ENCODE measurements at regions of chr6 and their contacts with region 1.

Region 1: DNA sequence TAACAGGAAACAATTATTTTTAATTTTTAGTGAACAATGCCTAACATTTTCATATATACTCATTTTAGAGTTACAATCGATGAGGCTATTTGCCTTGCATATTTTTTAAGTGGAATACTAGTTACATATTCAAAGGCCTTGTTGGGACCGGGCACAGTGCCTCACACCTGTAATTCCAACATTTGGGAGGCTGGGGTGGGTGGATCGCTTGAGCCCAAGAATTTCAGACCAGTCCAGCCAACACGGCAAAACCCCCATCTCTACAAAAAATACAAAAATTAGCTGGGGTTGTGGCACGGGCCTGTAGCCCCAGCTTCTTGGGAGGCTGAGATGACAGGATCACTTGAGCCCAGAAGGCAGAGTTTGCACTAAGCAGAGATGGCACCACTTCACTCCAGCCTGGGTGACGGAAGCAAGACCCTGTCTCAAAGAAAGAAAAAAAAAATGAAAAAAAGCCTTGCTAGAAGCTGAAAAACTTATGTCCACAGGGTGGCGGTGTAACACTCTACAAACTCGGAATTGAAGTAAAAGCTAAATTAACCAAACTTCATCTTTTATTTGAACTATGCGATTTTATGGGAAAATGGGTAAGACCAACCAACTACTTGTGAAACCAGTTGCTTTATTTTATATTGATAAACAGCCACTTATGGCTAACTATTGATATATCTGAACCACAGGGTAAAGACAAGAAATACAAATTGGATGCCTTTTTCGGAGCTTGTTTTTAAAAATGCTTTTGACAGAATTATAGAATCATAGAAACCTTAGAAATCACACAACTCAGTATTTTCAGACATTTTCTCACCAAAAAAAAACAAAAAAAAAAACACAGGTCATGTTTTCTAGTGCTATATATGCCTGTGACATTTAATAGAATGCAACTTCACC is 24.1 kb upstream of the ROS1 start:
- DNase-seq: peak; percentile 58
- H3K4me3 ChIP-seq: no peak overlapping the region
- H3K27ac ChIP-seq: no peak overlapping the region
- H3K4me1 ChIP-seq: peaks cover 0 to 34% (median 6%) of the 10 kb centered on the region in 4 donors
- H3K27me3 ChIP-seq: peaks cover 30% of the 10 kb centered on the region
- CTCF ChIP-seq: peak; percentile 64 to 83 (median 72)
- EP300 ChIP-seq: no peak
- POLR2A ChIP-seq: no peak

Region 2: DNA sequence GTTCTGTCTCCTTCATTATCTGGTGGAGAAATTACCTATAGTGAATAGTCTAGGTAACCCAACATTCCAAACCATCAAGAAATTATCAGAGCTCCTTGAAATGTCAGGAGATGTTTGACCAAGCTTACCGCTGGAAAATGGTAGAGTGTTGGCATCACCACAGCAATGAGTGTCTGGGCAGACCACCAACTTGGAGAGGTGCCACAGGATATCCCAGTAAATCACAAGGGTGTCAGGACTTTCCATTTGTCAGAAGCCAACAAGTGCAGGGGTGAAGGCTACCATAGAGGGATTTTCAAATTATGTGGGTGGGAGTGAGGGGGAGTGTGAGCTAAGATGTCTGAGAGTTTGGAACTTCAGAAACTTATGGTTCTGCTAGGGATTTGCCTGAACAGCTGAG is 111.2 kb before region 1 on chr6:
- in situ Hi-C with region 1: no loop called
- intact Hi-C with region 1: no loop called
- DNase-seq: no peak
- H3K4me3 ChIP-seq: no peak overlapping the region
- H3K27ac ChIP-seq: no peak overlapping the region
- H3K4me1 ChIP-seq: no peaks in the 10 kb centered on the region
- H3K27me3 ChIP-seq: no peaks in the 10 kb centered on the region
- CTCF ChIP-seq: no peak
- EP300 ChIP-seq: no peak
- POLR2A ChIP-seq: no peak

Region 3: GRCh38 chr6:117549611-117550010 is 99.8 kb after region 1 on chr6:
- in situ Hi-C with region 1: loop called in 3 of 4 experiments (anchors 5 to 10 kb)
- intact Hi-C with region 1: no loop called
- DNase-seq: no peak
- H3K4me3 ChIP-seq: no peak overlapping the region
- H3K27ac ChIP-seq: no peak overlapping the region
- H3K4me1 ChIP-seq: peaks cover 0 to 7% (median 0%) of the 10 kb centered on the region in 4 donors
- H3K27me3 ChIP-seq: no peaks in the 10 kb centered on the region
- CTCF ChIP-seq: no peak
- EP300 ChIP-seq: no peak
- POLR2A ChIP-seq: no peak

Region 4: GRCh38 chr6:117555882-117556498 is 106.2 kb after region 1 on chr6:
- in situ Hi-C with region 1: loop called in 3 of 4 experiments (anchors 5 to 10 kb)
- intact Hi-C with region 1: loop called (anchors 5 kb)
- DNase-seq: peak; percentile 49
- H3K4me3 ChIP-seq: no peak overlapping the region
- H3K27ac ChIP-seq: no peak overlapping the region
- H3K4me1 ChIP-seq: peaks cover 0 to 7% (median 0%) of the 10 kb centered on the region in 4 donors
- H3K27me3 ChIP-seq: no peaks in the 10 kb centered on the region
- CTCF ChIP-seq: peak; percentile 83 to 95 (median 85)
- EP300 ChIP-seq: no peak
- POLR2A ChIP-seq: no peak